Activated CD8-positive, alpha-beta T cell treated with anti-CD3 and anti-CD28 coated beads, Interleukin-2, amount 10 ng/mL, durations not matched to agents 7 days and 5 days (primary cell): ENCODE measurements at regions of chr10 and their contacts with region 1.

Region 1: DNA sequence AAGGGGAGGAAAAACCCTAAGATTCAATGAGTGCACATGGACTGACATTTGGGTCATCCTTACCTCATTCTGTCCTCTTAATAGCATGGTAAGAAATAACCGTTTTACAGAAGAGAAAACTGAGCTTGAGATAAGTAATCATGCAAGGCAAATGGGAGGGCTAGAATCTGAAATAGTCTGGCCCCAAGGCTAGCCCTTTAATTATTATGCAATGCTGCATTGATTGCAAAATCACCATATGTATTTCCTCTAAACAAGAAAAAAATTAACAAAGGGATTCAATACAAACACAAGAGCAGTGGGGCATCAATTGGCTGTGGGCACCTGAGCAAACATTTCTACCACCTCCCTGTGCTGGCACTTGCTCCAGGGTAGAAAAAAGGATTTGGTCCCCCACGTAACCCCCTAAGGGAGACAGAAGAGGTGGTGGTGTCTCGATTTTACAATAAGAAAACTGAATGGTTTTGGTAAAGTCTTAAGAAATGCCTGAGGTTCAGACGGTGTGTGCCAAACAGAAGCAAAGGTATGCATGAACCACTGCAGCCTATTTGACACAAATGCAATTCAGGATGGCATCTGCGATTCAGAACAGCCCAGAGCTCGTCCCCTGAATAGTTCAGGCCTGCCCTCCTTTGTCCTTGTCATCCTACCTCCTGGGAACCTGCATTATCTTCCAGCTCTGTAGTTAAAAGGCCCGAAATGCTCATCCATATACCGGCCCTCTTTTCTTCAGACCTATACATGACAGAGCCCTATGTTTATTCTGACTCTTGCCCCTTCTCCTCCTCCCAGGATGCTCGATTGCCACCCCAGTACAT is 23.6 kb downstream of the PIP4K2A start:
- DNase-seq: no peak
- ATAC-seq: no peak
- H3K4me3 Mint-ChIP-seq: no peak overlapping the region
- H3K27ac Mint-ChIP-seq: no peak overlapping the region
- H3K4me1 Mint-ChIP-seq: peaks cover 85% of the 10 kb centered on the region
- H3K27me3 Mint-ChIP-seq: no peaks in the 10 kb centered on the region

Region 2: DNA sequence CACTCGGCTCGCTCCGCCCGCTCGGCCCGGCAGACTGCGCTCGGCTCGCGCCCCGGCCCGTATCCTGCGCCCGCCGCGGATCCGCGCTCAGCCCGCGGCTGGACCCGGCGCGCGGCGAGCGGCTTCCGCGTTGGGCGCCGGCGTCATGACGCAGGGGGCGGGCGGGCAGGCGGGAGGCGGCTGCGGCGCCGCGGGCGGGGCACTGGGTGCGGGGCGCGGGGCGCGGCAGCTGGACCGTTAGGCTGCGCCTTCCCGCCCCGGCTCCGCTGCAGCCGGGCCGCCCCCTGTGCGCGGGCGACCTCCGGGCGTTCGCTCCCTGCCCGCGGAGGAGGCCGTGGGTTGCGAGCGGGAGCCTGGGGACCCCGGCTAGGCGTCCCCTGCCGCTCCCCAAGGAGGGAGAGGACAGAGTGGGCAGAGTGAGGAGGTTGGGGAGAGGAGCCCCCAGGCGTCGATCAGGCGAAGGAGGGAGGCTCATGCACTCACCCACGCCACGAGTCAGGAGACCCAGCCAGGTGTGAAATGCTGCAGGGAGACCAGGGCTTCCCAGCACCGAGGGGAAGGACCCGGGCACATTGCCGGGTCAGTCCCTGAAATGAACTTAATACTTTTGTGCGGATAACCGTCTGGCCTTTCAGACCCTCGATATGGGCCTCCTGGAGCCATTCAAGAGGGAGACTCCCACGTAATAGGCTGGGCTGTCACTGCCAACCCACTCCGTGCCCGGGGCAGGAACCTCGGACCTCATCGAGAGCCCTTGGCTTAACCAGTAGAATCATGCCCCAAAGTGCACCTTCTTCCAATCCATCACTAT is 23.9 kb after region 1 on chr10 and contains the start of gene PIP4K2A:
- CTCF ChIA-PET with region 1: interaction called, 7 read pairs
- POLR2A ChIA-PET with region 1: interaction called, 10 read pairs
- DNase-seq: peak; percentile 79
- ATAC-seq: peak; percentile 89
- H3K4me3 Mint-ChIP-seq: peak within 1 kb of the TSS; percentile 88
- H3K27ac Mint-ChIP-seq: peak within 1 kb of the TSS; percentile 86
- H3K4me1 Mint-ChIP-seq: peaks cover 33% of the 10 kb centered on the region
- H3K27me3 Mint-ChIP-seq: no peaks in the 10 kb centered on the region
- total RNA-seq, gene PIP4K2A: 154 to 164 TPM

Region 3: GRCh38 chr10:22727663-22728062 is 36.8 kb after region 1 on chr10:
- CTCF ChIA-PET with region 1: no interaction called
- POLR2A ChIA-PET with region 1: no interaction called
- DNase-seq: no peak
- ATAC-seq: no peak
- H3K4me3 Mint-ChIP-seq: no peak overlapping the region
- H3K27ac Mint-ChIP-seq: no peak overlapping the region
- H3K4me1 Mint-ChIP-seq: peaks cover 6% of the 10 kb centered on the region
- H3K27me3 Mint-ChIP-seq: peaks cover 2% of the 10 kb centered on the region